Left lung (tissue), 14 donors: ENCODE measurements at regions of chr11 and their contacts with region 1.

Region 1: DNA sequence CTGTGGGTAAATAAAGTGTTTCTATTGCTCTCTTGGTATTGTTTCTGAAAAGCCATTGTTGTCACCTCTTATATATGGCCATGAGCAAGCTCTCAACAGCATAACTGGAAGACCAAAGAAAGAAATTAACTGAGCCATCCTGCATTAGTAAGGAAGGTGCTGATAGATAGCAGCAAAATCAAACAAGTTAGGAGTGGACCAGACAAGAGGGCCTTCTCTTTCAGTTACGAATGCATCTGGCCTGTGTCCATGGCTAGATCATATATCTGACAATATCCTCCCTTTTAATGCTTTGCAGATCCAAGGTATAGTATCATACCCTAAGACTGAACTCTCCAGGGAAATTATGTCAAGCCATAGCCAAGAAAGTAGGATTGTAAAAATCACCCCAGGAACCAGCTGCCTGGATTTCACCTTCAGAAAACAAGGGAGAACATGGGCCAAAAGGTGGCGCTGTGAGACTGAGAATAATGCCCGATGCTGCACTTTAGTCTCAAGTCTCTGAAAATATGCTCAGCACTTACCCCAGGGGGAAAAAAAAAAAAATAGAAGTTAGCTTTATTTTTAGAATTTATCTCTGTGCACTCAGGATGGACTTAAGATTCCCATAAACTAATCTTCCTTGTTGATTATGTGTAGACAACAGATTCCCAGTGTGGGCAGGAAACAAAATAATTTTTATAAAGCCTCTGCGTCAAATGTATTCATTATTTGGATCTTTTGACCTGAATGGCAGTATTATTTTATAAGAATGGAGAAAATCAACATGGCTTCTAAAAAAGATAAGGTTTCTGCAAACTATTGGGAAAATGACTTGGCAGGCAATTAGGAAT is 415.1 kb downstream of the ETS1 start:
- DNase-seq: peak in 3 of 4 donors; percentile 71 to 85 (median 73)
- ATAC-seq: peak; percentile 98
- H3K4me3 ChIP-seq: no peak overlapping the region
- H3K27ac ChIP-seq: no peak overlapping the region
- H3K4me1 ChIP-seq: peaks cover 0 to 6% of the 10 kb centered on the region in 2 donors
- H3K27me3 ChIP-seq: no peaks in the 10 kb centered on the region
- CTCF ChIP-seq: peak; percentile 58 to 70

Region 2: DNA sequence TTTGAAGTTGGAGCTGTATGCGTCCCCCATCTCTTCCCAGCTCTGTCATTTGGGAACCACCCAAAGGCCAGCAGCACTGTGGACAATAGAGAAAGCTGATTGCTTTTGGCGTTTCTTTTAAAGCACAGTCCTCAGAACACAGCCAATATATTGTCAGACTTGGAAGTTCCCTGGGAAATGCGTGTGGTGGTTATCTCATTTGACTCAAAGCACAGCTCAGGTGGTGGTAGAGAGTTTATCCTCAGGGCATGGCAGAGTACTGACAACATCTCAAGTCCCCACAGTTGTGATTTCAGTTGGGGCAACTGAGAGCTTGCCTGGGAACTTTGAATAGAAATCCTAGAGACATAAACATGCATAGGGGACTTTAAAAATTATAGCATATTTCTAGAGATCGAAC is 186.2 kb before region 1 on chr11:
- intact Hi-C with region 1: no loop called
- DNase-seq: no peak
- ATAC-seq: no peak
- H3K4me3 ChIP-seq: no peak overlapping the region
- H3K27ac ChIP-seq: no peak overlapping the region
- H3K4me1 ChIP-seq: no peaks in the 10 kb centered on the region
- H3K27me3 ChIP-seq: no peaks in the 10 kb centered on the region
- CTCF ChIP-seq: no peak

Region 3: GRCh38 chr11:128630367-128631230 is 458.3 kb after region 1 on chr11:
- intact Hi-C with region 1: loop called in 1 of 2 experiments (anchors 5 kb)
- DNase-seq: peak; percentile 84 to 91 (median 90)
- ATAC-seq: peak; percentile 97
- H3K4me3 ChIP-seq: no peak overlapping the region
- H3K27ac ChIP-seq: peak overlapping the region in 1 of 2 donors; percentile 28
- H3K4me1 ChIP-seq: peaks cover 6 to 41% of the 10 kb centered on the region in 2 donors
- H3K27me3 ChIP-seq: no peaks in the 10 kb centered on the region
- CTCF ChIP-seq: peak; percentile 89

Region 4: DNA sequence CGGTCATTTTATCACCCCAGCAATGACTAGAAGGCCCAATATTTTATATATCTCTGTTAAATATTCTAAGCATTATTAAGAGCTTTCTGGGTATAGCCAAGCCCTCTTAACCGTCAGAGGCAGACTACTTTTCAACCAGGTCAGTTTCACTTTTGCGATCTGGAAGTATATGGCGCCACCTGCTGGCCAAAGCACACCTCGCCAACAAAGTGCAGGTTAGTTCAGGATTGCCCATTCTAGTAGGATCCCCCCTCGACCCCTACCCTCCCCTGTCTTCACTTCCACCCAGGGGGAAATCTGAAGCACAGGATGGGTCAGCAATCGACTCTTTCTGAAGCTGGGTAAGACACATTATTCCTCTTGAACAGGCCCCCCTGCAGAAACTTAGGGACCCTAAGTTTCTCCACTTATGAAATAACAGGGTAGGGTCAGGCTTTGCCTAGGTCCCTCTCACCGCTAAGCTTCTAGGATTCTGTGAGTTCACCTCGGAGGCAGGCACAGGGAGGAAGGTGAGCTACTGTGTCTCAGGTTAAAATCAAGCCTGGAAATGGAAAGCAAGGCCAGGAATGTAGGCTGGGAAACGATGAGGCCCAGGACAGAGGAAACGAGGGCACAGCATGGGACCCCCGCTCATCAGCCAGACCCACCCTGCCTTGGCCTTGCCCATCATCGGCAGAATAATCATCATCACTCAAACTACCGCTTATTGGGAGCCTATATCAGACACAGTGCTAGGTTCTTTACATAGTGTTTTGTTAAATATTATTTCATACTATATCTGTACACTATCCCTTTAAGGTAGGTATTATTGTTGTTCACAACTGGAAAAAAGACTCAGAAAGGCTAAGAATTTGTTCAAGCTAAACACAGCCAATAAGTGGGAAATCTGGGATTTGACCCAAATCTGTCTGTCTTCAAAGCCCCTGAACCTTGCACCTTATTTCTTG is 659.2 kb after region 1 on chr11:
- intact Hi-C with region 1: loop called in 1 of 2 experiments (anchors 5 kb)
- DNase-seq: peak; percentile 78 to 88 (median 82)
- ATAC-seq: peak; percentile 97
- H3K4me3 ChIP-seq: peak overlapping the region in 1 of 2 donors; percentile 16
- H3K27ac ChIP-seq: peak overlapping the region in 1 of 2 donors; percentile 34
- H3K4me1 ChIP-seq: peaks cover 0 to 38% of the 10 kb centered on the region in 2 donors
- H3K27me3 ChIP-seq: no peaks in the 10 kb centered on the region
- CTCF ChIP-seq: peak; percentile 75 to 89